ENCODE measurements at regions of chr1 and their contacts with region 1.

Region 1: GRCh38 chr1:10635085-10635896 is 160.5 kb downstream of the PEX14 start:
- DNase-seq: no peak
- H3K4me3 ChIP-seq: no peak overlapping the region
- H3K27ac ChIP-seq: peak overlapping the region in 1 of 2 donors; percentile 59
- H3K4me1 ChIP-seq: peaks cover 23% of the 10 kb centered on the region
- H3K27me3 ChIP-seq: no peaks in the 10 kb centered on the region
- CTCF ChIP-seq: no peak
- EP300 ChIP-seq: no peak
- POLR2A ChIP-seq: no peak

Region 2: DNA sequence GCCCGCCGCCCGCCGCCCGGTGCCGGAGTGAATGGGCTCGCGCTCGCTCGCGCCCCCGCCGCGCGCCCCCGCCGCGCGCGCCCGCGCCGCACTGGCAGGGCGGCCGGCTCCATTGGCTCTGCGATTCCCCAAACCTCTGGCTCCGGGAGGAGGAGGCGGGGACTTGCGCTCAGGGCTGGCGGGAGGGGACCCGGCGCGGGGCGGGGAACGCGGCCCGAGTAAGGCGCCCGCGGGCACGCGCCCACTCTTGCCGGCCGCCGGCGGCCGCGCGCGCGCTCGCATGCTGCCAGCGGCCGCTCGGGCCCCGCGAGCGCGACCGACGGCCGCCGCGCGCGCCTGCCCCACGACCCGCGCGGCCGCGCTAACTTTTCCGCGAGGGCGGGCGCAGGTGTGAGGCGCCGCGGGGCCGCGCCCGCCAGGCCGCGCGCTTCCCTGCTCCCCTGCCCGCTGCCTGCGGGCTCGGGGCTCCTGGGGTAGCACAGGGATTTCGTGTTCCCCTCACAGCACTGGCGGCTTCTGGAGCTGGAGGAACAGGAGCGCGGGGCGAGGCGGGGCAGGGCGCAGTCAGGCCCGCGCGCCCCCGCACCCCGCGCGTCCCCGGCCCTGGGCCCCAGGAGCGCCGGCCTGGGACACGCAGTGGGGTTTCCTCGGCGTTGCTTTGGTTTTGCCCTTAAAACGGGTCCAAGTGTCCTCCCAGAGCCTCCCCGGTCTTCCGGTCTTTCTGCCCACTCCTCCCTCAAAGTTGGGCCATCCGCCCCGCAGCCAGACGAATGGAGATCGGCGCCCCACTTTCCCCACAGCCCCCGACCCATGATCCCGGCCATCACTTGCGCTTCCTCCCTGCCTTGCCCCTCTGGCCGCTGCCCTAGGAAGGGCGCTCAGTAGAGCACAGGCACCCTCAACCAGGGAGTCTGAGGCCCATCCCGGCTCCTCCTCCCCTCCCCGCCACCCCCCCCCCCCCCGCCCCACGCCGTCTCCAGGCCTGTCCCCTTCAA is 59.6 kb after region 1 on chr1:
- intact Hi-C with region 1: loop called in 1 of 4 experiments (anchors 10 kb)
- DNase-seq: peak; percentile 87 to 92 (median 90)
- H3K4me3 ChIP-seq: peak overlapping the region; percentile 48
- H3K27ac ChIP-seq: peak overlapping the region in 1 of 2 donors; percentile 61
- H3K4me1 ChIP-seq: no peaks in the 10 kb centered on the region
- H3K27me3 ChIP-seq: no peaks in the 10 kb centered on the region
- CTCF ChIP-seq: no peak
- EP300 ChIP-seq: no peak
- POLR2A ChIP-seq: no peak

Region 3: DNA sequence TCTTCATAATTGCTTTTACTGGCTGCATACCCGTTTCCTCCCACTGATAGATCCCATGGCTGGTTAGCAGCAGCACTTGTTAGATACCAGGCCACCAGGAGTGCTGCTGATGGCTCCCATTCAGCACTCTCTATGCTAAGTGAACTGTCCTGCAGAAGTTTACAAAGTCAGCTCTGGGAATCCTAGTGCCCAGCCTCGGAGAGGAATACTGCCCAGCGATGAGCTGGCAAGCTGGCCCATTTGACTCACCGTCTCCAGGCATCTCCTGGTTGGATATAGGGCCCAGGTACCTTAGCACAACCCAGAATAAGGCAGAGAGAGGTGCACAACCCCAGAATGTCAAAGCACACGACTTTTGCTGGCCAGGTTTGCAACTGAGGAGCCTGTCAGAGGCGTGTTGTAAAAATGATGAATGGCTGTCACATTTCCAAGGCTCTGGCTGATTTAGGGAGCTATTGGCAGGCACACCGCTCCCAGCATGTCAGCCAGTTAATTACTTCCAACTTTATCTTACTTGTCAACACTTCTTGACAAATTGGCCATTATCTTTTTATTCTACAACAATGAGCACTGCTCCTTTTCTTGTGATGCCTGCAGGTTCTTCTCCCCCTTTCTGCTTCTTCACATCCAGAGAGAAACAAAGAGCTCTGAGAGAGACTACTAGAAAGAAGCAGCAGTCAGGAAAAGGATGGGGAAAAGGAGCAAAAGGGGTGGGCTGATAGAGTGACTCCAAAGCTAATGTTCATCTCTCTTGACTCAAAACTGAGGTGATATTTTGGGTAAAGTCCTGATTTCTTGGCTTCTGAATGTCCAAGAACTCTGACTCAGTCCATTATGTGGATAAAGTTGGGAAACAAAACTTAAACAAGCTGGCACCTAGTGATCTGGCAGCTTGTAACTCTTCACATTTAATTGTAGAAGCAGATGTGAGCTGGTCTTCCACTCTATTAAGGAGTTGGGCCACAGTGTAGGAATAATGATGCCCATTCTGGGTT is 543.0 kb after region 1 on chr1:
- intact Hi-C with region 1: no loop called
- DNase-seq: no peak
- H3K4me3 ChIP-seq: no peak overlapping the region
- H3K27ac ChIP-seq: no peak overlapping the region
- H3K4me1 ChIP-seq: peaks cover 7% of the 10 kb centered on the region
- H3K27me3 ChIP-seq: no peaks in the 10 kb centered on the region
- CTCF ChIP-seq: no peak
- EP300 ChIP-seq: no peak
- POLR2A ChIP-seq: no peak